Caco-2 (cell line): ENCODE measurements at regions of chr3 and their contacts with region 1.

Region 1: GRCh38 chr3:80215191-80215590 is 447.4 kb upstream of the ROBO1 start:
- DNase-seq: no peak
- H3K4me3 ChIP-seq: no peak overlapping the region
- H3K4me3 Mint-ChIP-seq: no peak overlapping the region
- H3K27ac Mint-ChIP-seq: no peak overlapping the region
- H3K4me1 ChIP-seq: no peaks in the 10 kb centered on the region
- H3K4me1 Mint-ChIP-seq: no peaks in the 10 kb centered on the region
- H3K27me3 ChIP-seq: no peaks in the 10 kb centered on the region
- H3K27me3 Mint-ChIP-seq: peaks cover 4% of the 10 kb centered on the region
- CTCF ChIP-seq: no peak

Region 2: DNA sequence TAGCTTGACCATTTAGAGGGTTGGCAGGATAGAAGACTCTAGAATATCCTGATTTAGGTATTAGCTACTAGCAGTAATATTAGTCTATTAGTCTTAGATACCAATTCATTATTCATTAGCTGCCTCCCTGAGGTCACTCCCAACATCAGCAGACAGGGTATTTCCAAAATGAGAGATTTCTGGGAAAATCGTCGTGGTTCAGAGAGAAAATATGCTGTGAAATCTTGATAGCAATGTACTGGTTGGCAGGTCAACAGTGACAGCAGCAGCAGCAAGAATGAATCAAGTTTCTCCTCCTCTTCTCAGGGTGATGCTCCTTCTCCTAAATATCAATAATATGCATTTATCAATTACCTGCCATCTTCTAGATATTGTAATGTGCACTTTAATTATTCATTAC is 406.1 kb before region 1 on chr3:
- CTCF ChIA-PET with region 1: no interaction called
- POLR2A ChIA-PET with region 1: no interaction called
- intact Hi-C with region 1: loop called (anchors 5 kb)
- DNase-seq: no peak
- H3K4me3 ChIP-seq: no peak overlapping the region
- H3K4me3 Mint-ChIP-seq: no peak overlapping the region
- H3K27ac Mint-ChIP-seq: no peak overlapping the region
- H3K4me1 ChIP-seq: no peaks in the 10 kb centered on the region
- H3K4me1 Mint-ChIP-seq: no peaks in the 10 kb centered on the region
- H3K27me3 ChIP-seq: no peaks in the 10 kb centered on the region
- H3K27me3 Mint-ChIP-seq: no peaks in the 10 kb centered on the region
- CTCF ChIP-seq: no peak